ENCODE measurements at regions of chr19 and their contacts with region 1.

Region 1: DNA sequence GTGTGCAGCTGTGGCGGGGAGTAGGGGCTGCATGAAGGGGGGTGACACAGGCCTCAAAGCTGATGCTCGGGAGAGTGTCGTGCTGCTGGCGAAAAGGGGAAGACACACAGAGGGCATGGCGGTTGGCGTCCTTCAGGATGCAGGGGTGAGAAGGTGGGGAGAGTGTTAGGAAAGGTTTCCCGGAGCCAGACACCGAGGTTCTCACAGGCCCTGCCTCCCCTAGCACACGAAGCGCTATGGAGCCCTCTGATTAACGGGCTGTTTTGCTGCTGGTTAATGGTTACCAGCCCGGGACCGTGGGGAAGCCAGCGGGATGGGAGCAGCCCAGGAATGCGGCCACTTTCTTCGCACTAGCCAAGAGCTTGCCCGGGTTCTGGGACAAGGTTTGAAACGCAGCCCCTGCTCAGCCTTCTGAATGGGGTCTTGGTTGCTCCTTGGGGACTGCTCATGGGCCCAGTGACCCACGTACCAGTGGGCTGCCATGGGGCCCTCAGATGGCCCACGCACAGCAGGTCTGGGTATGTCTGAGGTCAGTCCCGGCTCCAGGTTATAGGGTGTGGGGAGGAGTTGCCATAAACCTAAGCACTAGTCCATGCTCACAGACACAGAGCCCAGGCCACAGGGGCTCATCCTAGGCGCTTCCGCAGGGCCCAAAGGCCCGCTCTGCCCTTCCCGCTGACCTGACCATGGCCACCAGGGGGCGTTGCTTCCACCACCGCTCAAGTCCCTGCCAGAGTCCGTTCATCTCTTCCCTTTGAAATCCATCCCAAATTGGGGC is 31.3 kb upstream of the ISYNA1 start:
- DNase-seq: peak; percentile 67 to 90 (median 87)
- ATAC-seq: peak; percentile 21 to 40
- H3K4me3 ChIP-seq: no peak overlapping the region
- H3K27ac ChIP-seq: no peak overlapping the region
- H3K4me1 ChIP-seq: peaks cover 16% of the 10 kb centered on the region
- H3K27me3 ChIP-seq: no peaks in the 10 kb centered on the region

Region 2: DNA sequence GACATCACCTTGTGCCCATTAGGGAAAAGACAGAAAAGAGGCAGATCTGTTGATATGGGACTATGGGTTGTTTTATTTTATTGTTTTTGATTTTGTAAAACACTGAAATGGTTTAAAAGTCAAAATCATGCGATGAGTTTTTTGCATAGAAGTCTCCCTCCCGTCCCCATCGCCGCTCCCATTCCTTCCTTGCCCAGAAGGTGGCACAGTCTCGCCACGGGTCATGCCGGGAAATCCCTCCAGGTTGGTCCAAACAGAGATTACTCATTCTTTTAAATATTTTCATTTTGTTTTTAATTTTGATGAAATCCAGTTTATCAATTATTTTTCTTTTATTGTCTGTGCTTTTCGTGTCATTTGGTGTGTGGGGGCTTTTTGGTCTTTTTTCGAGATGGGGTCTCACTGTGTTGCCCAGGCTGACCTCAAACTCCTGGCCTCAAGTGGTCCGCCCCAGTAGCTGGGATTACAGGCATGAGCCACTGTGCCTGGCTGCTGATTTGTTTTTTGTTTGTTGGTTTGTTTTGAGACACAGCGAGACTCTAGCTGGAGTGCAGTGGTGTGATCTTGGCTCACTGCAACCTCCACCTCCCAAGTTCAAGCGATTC is 119.6 kb before region 1 on chr19:
- intact Hi-C with region 1: no loop called
- DNase-seq: peak; percentile 34 to 76 (median 69)
- ATAC-seq: peak in 1 of 2 donors; percentile 66
- H3K4me3 ChIP-seq: no peak overlapping the region
- H3K27ac ChIP-seq: no peak overlapping the region
- H3K4me1 ChIP-seq: no peaks in the 10 kb centered on the region
- H3K27me3 ChIP-seq: no peaks in the 10 kb centered on the region

Region 3: DNA sequence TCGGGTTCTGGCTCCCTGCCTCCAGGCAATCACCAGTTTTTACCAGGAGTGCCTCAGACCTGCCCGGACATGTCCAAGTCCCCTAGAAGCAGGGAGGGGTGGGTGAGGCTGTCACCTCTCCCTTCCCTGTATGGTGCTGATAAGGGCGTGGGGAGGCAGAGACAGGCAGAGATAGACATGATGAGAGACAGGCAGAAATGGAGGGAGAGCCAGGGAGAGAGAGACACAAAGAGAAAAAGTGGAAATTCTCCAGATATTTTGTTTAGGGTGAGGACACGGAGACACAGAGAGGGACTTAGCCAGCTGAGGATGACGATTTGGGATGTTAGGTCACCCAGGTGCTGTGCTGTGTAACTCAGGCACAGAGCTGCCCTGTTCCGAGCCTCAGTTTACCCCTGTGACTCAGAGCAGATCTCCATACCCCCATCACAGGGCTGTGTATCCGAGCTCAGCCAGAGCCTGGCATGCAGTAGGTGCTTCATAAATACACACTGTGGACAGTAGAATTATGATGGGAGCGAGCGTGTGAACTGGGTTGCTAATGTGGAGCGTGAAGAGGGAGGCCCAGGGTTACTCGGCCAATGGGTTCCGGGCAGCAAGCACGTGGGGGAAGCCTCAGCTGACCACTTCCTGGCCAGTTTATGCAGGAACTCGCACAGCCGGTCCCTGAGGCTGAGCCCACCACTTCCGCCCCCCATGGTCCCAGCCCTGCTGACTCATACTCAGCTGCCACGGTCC is 95.2 kb before region 1 on chr19:
- intact Hi-C with region 1: no loop called
- DNase-seq: peak; percentile 94 to 95 (median 95)
- ATAC-seq: peak; percentile 94 to 97
- H3K4me3 ChIP-seq: no peak overlapping the region
- H3K27ac ChIP-seq: peak overlapping the region; percentile 43
- H3K4me1 ChIP-seq: peaks cover 11% of the 10 kb centered on the region
- H3K27me3 ChIP-seq: no peaks in the 10 kb centered on the region

Region 4: GRCh38 chr19:18436671-18437490 is 32.4 kb before region 1 on chr19:
- intact Hi-C with region 1: no loop called
- DNase-seq: peak; percentile 87 to 95 (median 93)
- ATAC-seq: peak; percentile 47 to 56
- H3K4me3 ChIP-seq: peak overlapping the region; percentile 58
- H3K27ac ChIP-seq: no peak overlapping the region
- H3K4me1 ChIP-seq: peaks cover 6% of the 10 kb centered on the region
- H3K27me3 ChIP-seq: no peaks in the 10 kb centered on the region

Region 5: GRCh38 chr19:18521885-18522624 is 52.8 kb after region 1 on chr19 and contains the start of gene ELL:
- intact Hi-C with region 1: loop called in 3 of 4 experiments (anchors 5 to 10 kb)
- DNase-seq: peak; percentile 100
- ATAC-seq: peak; percentile 94 to 96
- H3K4me3 ChIP-seq: peak within 1 kb of the TSS; percentile 90
- H3K27ac ChIP-seq: peak within 1 kb of the TSS; percentile 93
- H3K4me1 ChIP-seq: peaks cover 5% of the 10 kb centered on the region
- H3K27me3 ChIP-seq: no peaks in the 10 kb centered on the region
- total RNA-seq, gene ELL: 12.6 to 19.0 (median 14.0) TPM

Region 6: DNA sequence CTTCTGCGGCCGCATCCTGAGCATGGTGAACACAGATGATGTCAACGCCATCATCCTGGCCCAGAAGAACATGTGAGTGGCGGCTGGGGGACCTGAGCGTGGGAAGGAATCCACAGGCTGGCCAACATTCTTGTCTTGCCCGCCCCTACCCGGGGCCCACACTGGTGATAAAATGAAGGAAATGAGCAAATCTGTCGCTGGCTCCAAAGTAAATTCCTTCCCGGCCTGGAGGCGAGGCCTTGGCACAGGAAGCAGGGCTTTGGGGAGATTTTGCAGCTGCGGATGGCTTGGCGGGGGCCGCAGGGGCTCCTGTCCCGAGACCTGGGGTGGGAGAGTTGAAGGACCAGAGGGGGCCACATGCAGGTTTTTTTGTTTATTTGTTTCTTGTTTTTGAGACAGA is 92.8 kb after region 1 on chr19:
- intact Hi-C with region 1: loop called in 2 of 4 experiments (anchors 10 kb)
- DNase-seq: peak; percentile 75 to 85 (median 83)
- ATAC-seq: peak; percentile 48 to 63
- H3K4me3 ChIP-seq: no peak overlapping the region
- H3K27ac ChIP-seq: peak overlapping the region; percentile 89
- H3K4me1 ChIP-seq: no peaks in the 10 kb centered on the region
- H3K27me3 ChIP-seq: no peaks in the 10 kb centered on the region

Region 7: GRCh38 chr19:18588611-18589379 is 119.5 kb after region 1 on chr19 and contains the start of gene REX1BD:
- intact Hi-C with region 1: loop called in 1 of 4 experiments (anchors 10 kb)
- DNase-seq: peak; percentile 90 to 96 (median 96)
- ATAC-seq: peak; percentile 93
- H3K4me3 ChIP-seq: peak within 1 kb of the TSS; percentile 51
- H3K27ac ChIP-seq: peak within 1 kb of the TSS; percentile 76
- H3K4me1 ChIP-seq: peaks cover 5% of the 10 kb centered on the region
- H3K27me3 ChIP-seq: no peaks in the 10 kb centered on the region
- total RNA-seq, gene REX1BD: 71.0 to 90.7 (median 77.1) TPM

Measured in right cardiac atrium (tissue), 5 donors.